ENCODE measurements at regions of chr7 and their contacts with region 1.

Region 1: GRCh38 chr7:106009403-106010226 is 46.6 kb downstream of the CDHR3 start:
- DNase-seq: peak; percentile 68
- H3K4me3 ChIP-seq: no peak overlapping the region
- CTCF ChIP-seq: peak; percentile 88

Region 2: DNA sequence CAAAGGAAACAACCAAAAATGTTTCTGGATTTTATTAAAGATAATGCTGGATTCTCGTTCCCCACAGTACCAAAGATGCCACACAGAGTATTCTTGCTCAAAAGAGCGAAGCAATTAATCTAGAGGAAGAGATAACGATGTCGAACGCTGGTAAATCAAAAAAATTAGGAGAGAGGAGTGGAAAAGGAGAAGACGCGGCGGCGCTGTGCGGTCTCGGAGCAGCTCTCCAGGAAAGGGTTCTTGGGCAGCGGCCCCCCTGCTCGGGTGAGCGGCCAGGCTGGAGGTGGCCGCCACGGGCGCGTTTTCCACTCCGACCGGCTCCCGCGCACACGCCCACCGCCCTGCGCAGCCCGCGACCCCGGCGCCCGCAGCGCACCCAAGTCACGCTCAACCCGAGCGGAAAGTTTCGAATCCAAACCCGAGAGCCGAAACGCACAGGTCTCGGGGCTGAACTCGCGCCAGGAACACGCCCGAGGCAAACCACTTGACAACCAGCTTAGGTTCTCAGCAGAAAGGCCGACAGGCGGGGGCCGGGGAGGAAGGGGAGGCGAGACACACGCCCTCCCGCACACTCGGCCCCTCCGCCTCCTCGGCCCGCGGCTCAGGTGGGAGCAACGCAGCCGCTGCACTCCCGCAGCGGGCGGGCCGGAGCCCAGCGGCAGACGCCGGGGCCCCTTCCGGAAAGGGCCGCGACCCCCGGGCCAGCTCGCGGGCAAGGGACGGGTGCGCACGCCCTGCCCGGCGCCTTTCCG is 621.8 kb before region 1 on chr7:
- in situ Hi-C with region 1: no loop called
- DNase-seq: no peak
- H3K4me3 ChIP-seq: peak overlapping the region; percentile 80
- CTCF ChIP-seq: no peak

Region 3: GRCh38 chr7:105759670-105760550 is 249.7 kb before region 1 on chr7:
- in situ Hi-C with region 1: loop called (anchors 25 kb)
- DNase-seq: peak; percentile 58
- H3K4me3 ChIP-seq: no peak overlapping the region
- CTCF ChIP-seq: peak; percentile 57

Measured in astrocyte of the cerebellum (primary cell).